Naive thymus-derived CD4-positive, alpha-beta T cell (primary cell): ENCODE measurements at regions of chr12 and their contacts with region 1.

Region 1: DNA sequence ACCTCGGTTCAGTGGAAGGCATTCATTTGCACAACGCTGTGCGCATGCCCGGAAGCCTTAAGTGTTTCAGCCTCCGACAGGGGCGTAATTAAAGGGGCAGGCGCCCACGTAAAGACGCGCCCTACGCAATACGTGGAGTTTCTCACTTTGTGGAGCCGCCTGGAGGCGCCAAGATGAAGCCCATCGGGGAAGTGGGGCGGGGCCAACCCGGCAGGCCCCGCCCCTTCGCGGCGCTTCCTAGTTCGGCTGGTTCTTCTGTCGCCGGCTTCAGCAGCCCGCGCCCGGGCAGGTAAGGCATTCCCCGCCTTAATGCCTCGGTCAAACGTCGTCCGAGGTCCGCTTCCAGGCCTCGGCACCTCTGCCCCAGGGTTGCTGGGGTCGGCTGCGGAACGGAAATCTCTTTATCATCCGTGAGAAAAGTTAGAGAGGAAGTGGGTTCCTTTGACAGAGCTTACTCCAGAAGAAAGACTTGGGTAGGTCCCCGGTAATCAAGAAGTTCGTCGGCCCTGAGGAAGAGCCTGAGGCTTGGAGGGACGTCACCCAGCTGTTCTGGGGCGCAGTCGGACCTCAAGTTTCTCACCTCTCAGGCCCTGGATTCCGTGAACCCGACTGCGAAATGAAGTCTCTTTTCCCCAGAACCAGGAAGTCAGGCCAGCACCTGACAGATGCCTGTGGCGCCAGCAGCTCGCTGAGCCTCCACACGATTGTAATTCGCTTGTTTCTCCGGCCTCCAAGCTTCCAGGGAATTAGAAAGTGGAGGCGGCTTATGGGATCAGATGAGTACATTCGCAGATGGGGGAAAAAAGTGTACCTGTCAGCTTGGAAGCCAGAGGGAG is at the starts of genes IRAK4 and PUS7L:
- DNase-seq: peak; percentile 83 to 95 (median 92)
- ATAC-seq: peak; percentile 99
- H3K4me3 ChIP-seq: peak within 1 kb of the TSS; percentile 78
- H3K4me3 Mint-ChIP-seq: peak within 1 kb of the TSS; percentile 88 to 99 (median 97)
- H3K27ac ChIP-seq: peak within 1 kb of the TSS; percentile 86
- H3K27ac Mint-ChIP-seq: peak within 1 kb of the TSS; percentile 84 to 99 (median 99)
- H3K4me1 ChIP-seq: peaks cover 41 to 42% of the 10 kb centered on the region in 2 donors
- H3K4me1 Mint-ChIP-seq: peaks cover 52 to 89% (median 85%) of the 10 kb centered on the region in 7 donors
- H3K27me3 ChIP-seq: no peaks in the 10 kb centered on the region
- H3K27me3 Mint-ChIP-seq: no peaks in the 10 kb centered on the region
- total RNA-seq, gene IRAK4: 35.6 to 69.1 (median 52.7) TPM
- total RNA-seq, gene PUS7L: 14.0 to 27.4 (median 23.2) TPM

Region 2: GRCh38 chr12:42144408-42145196 is 1614.3 kb before region 1 on chr12 and contains the start of gene GXYLT1:
- CTCF ChIA-PET with region 1: no interaction called
- POLR2A ChIA-PET with region 1: no interaction called
- intact Hi-C with region 1: loop called in 1 of 2 experiments (anchors 10 kb)
- DNase-seq: peak; percentile 60 to 89 (median 73)
- ATAC-seq: peak; percentile 94
- H3K4me3 ChIP-seq: peak within 1 kb of the TSS; percentile 54
- H3K4me3 Mint-ChIP-seq: peak within 1 kb of the TSS; percentile 89 to 98 (median 94)
- H3K27ac ChIP-seq: peak within 1 kb of the TSS; percentile 62
- H3K27ac Mint-ChIP-seq: peak within 1 kb of the TSS; percentile 80 to 95 (median 89)
- H3K4me1 ChIP-seq: peaks cover 7 to 11% of the 10 kb centered on the region in 2 donors
- H3K4me1 Mint-ChIP-seq: peaks cover 32 to 54% (median 45%) of the 10 kb centered on the region in 7 donors
- H3K27me3 ChIP-seq: no peaks in the 10 kb centered on the region
- H3K27me3 Mint-ChIP-seq: peaks cover 0 to 11% (median 0%) of the 10 kb centered on the region in 5 donors
- total RNA-seq, gene GXYLT1: 6.7 to 9.7 (median 7.2) TPM

Region 3: DNA sequence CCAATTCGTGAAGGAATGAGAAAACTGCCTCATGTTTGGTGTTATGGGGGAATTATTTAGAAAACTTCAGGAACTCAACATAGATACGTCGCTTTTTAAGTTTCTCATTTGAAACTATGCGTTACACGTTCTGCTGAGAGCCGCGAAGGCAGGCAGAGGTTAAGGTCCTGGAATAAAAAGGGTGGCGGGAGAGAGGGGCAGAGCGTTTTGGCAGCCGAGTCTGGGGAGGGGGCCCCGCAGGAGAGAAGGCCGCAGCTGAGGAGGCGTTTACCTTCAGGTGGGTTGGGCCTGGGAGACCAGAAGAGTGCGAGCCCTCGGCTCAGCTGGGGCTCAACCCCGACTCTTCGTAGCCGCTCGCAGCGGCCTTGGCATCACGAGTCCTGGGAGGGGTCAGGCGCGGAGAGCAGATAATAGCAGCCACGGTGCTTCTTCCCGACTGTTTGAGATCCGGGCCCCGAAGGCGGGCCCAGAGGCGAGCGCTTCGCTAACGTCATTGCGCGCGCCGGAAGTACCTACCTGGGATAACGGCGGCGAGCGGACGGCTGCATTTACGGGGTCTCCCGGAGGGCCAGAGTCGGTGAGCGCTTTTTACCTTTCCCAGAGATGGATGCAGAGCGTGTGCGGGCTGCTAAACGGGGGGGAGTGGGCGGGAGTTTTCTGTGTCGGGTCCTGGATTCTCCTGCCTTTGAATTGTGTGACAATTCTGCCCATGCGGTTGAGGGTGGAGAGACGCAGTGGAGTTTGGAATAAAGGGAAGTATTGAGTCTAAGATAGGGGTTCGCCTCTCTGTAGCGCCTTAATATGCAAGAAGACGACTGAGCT is 1433.1 kb before region 1 on chr12 and contains the starts of genes PPHLN1 and ZCRB1:
- CTCF ChIA-PET with region 1: no interaction called
- POLR2A ChIA-PET with region 1: no interaction called
- intact Hi-C with region 1: loop called in 1 of 2 experiments (anchors 10 kb)
- DNase-seq: peak; percentile 61 to 79 (median 74)
- ATAC-seq: peak; percentile 94
- H3K4me3 ChIP-seq: peak within 1 kb of the TSS; percentile 69
- H3K4me3 Mint-ChIP-seq: peak within 1 kb of the TSS; percentile 92 to 100 (median 98)
- H3K27ac ChIP-seq: peak within 1 kb of the TSS; percentile 80
- H3K27ac Mint-ChIP-seq: peak within 1 kb of the TSS; percentile 93 to 99 (median 97)
- H3K4me1 ChIP-seq: peaks cover 15 to 20% of the 10 kb centered on the region in 2 donors
- H3K4me1 Mint-ChIP-seq: peaks cover 33 to 57% (median 50%) of the 10 kb centered on the region in 7 donors
- H3K27me3 ChIP-seq: no peaks in the 10 kb centered on the region
- H3K27me3 Mint-ChIP-seq: no peaks in the 10 kb centered on the region
- total RNA-seq, gene PPHLN1: 89.1 to 97.6 (median 90.2) TPM
- total RNA-seq, gene ZCRB1: 20.3 to 47.5 (median 23.8) TPM

Region 4: GRCh38 chr12:43805860-43806736 is 47.2 kb after region 1 on chr12 and contains the start of gene TWF1:
- CTCF ChIA-PET with region 1: interaction called, 6 read pairs
- POLR2A ChIA-PET with region 1: interaction called, 76 read pairs
- intact Hi-C with region 1: loop called (anchors 1 kb)
- DNase-seq: peak; percentile 76 to 94 (median 89)
- ATAC-seq: peak; percentile 97
- H3K4me3 ChIP-seq: peak within 1 kb of the TSS; percentile 67
- H3K4me3 Mint-ChIP-seq: peak within 1 kb of the TSS; percentile 94 to 100 (median 100)
- H3K27ac ChIP-seq: peak within 1 kb of the TSS; percentile 94
- H3K27ac Mint-ChIP-seq: peak within 1 kb of the TSS; percentile 98 to 100 (median 100)
- H3K4me1 ChIP-seq: peaks cover 20 to 33% of the 10 kb centered on the region in 2 donors
- H3K4me1 Mint-ChIP-seq: peaks cover 13 to 73% (median 59%) of the 10 kb centered on the region in 7 donors
- H3K27me3 ChIP-seq: no peaks in the 10 kb centered on the region
- H3K27me3 Mint-ChIP-seq: no peaks in the 10 kb centered on the region
- total RNA-seq, gene TWF1: 26.7 to 51.2 (median 35.6) TPM

Region 5: GRCh38 chr12:43882578-43883178 is 123.7 kb after region 1 on chr12:
- CTCF ChIA-PET with region 1: interaction called, 6 read pairs
- POLR2A ChIA-PET with region 1: interaction called, 3 read pairs
- intact Hi-C with region 1: loop called (anchors 1 kb)
- DNase-seq: peak in 7 of 9 donors; percentile 38 to 65 (median 56)
- ATAC-seq: peak; percentile 85
- H3K4me3 ChIP-seq: no peak overlapping the region
- H3K4me3 Mint-ChIP-seq: no peak overlapping the region
- H3K27ac ChIP-seq: no peak overlapping the region
- H3K27ac Mint-ChIP-seq: no peak overlapping the region
- H3K4me1 ChIP-seq: no peaks in the 10 kb centered on the region
- H3K4me1 Mint-ChIP-seq: peaks cover 0 to 3% (median 0%) of the 10 kb centered on the region in 7 donors
- H3K27me3 ChIP-seq: no peaks in the 10 kb centered on the region
- H3K27me3 Mint-ChIP-seq: no peaks in the 10 kb centered on the region